ENCODE measurements at regions of chr11 and their contacts with region 1.

Region 1: DNA sequence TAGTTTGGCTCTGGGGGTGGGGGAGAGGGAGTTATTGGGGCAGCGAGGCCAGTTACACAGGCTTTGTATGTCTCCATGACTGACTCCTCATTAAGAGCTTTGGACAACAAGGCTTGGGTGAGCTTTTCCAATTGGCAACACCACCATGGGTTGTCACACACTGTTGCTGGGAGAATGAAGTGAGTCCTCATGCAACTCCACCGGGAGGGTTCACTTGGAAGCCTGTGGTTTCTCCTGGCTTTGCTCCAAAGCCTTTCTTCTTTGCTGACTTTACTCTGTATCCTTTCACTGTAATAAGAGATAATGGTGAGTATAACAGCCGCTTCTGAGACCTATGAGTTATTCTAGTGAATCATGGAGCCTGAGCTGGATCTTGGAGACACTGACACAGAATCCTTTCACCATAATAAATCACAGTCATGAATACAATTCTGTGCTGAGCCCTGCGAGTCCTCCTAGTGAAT is 24.9 kb downstream of the EIF3F start:
- DNase-seq: no peak
- ATAC-seq: no peak
- H3K4me3 ChIP-seq: no peak overlapping the region
- H3K27ac ChIP-seq: no peak overlapping the region
- H3K4me1 ChIP-seq: no peaks in the 10 kb centered on the region
- H3K27me3 ChIP-seq: peaks cover 0 to 15% (median 0%) of the 10 kb centered on the region in 9 donors
- CTCF ChIP-seq: no peak
- POLR2A ChIP-seq: no peak

Region 2: DNA sequence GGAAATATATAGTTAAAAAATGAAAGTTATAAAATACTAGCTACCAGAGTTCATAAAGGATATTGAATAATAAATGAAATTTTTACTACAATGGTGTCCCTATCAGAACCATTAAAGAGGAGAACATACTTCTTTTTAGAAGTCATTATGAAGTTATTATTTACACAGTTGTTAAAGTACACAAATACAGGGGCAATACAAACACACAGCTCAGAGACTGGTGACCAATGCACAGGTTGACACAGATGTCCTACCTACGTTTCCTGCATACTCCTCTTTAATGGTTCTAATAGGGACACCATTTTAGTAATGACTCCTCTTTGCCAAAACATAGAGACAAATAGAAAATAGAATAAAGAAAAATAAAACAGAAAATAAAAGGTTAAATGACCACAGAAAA is 56.8 kb before region 1 on chr11:
- intact Hi-C with region 1: no loop called
- DNase-seq: no peak
- ATAC-seq: no peak
- H3K4me3 ChIP-seq: no peak overlapping the region
- H3K27ac ChIP-seq: no peak overlapping the region
- H3K4me1 ChIP-seq: no peaks in the 10 kb centered on the region
- H3K27me3 ChIP-seq: peaks cover 0 to 7% (median 0%) of the 10 kb centered on the region in 9 donors
- CTCF ChIP-seq: no peak
- POLR2A ChIP-seq: no peak

Region 3: GRCh38 chr11:8087185-8087584 is 75.2 kb after region 1 on chr11:
- intact Hi-C with region 1: loop called in 4 of 10 experiments (anchors 2 to 5 kb)
- DNase-seq: peak in 1 of 5 donors; percentile 22
- ATAC-seq: no peak
- H3K4me3 ChIP-seq: no peak overlapping the region
- H3K27ac ChIP-seq: no peak overlapping the region
- H3K4me1 ChIP-seq: peaks cover 0 to 57% (median 34%) of the 10 kb centered on the region in 12 donors
- H3K27me3 ChIP-seq: no peaks in the 10 kb centered on the region
- CTCF ChIP-seq: peak in 4 of 12 donors; percentile 14 to 32 (median 24)
- POLR2A ChIP-seq: no peak

Region 4: GRCh38 chr11:8099291-8099899 is 87.4 kb after region 1 on chr11:
- intact Hi-C with region 1: loop called in 7 of 10 experiments (anchors 2 to 5 kb)
- DNase-seq: peak in 4 of 5 donors; percentile 59 to 73 (median 70)
- ATAC-seq: peak; percentile 47 to 70 (median 56)
- H3K4me3 ChIP-seq: no peak overlapping the region
- H3K27ac ChIP-seq: no peak overlapping the region
- H3K4me1 ChIP-seq: no peaks in the 10 kb centered on the region
- H3K27me3 ChIP-seq: no peaks in the 10 kb centered on the region
- CTCF ChIP-seq: peak; percentile 52 to 89 (median 80)
- POLR2A ChIP-seq: no peak